ENCODE measurements at regions of chr7 and their contacts with region 1.

Region 1: DNA sequence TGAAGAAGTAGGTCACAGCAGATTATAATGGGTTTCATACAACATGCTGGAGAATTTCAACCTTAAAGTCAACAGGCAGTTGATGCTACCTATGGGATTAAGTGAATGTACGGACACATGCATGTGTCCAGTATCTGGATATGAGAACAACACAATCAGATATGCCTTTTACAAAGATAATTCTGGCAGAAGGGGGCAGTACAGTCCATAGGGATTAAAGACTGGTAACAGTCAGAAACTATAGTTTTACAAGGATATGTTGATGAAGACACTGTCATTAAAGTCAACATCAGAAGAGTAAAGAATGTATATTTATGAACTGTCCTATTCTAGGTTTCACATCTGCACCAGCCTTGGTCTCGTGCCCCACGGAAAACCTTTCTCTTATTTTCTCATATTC is 41.5 kb downstream of the ANKMY2 start:
- DNase-seq: no peak
- H3K4me3 ChIP-seq: no peak overlapping the region
- H3K4me3 Mint-ChIP-seq: no peak overlapping the region
- H3K27ac Mint-ChIP-seq: no peak overlapping the region
- H3K4me1 ChIP-seq: peaks cover 8% of the 10 kb centered on the region
- H3K4me1 Mint-ChIP-seq: peaks cover 12% of the 10 kb centered on the region
- H3K27me3 ChIP-seq: no peaks in the 10 kb centered on the region
- H3K27me3 Mint-ChIP-seq: no peaks in the 10 kb centered on the region
- CTCF ChIP-seq: peak in 1 of 2 experiments; percentile 8

Region 2: GRCh38 chr7:16688249-16688648 is 84.2 kb after region 1 on chr7:
- CTCF ChIA-PET with region 1: no interaction called
- POLR2A ChIA-PET with region 1: no interaction called
- intact Hi-C with region 1: loop called (anchors 5 kb)
- DNase-seq: peak in 1 of 2 experiments; percentile 39
- H3K4me3 ChIP-seq: no peak overlapping the region
- H3K4me3 Mint-ChIP-seq: no peak overlapping the region
- H3K27ac Mint-ChIP-seq: no peak overlapping the region
- H3K4me1 ChIP-seq: peaks cover 13% of the 10 kb centered on the region
- H3K4me1 Mint-ChIP-seq: peaks cover 25% of the 10 kb centered on the region
- H3K27me3 ChIP-seq: no peaks in the 10 kb centered on the region
- H3K27me3 Mint-ChIP-seq: no peaks in the 10 kb centered on the region
- CTCF ChIP-seq: peak in 1 of 2 experiments; percentile 5

Region 3: GRCh38 chr7:16753102-16753931 is 149.3 kb after region 1 on chr7 and contains the start of gene TSPAN13:
- CTCF ChIA-PET with region 1: no interaction called
- POLR2A ChIA-PET with region 1: no interaction called
- intact Hi-C with region 1: loop called (anchors 5 kb)
- DNase-seq: peak; percentile 98 to 99
- H3K4me3 ChIP-seq: peak within 1 kb of the TSS; percentile 91
- H3K4me3 Mint-ChIP-seq: peak within 1 kb of the TSS; percentile 92
- H3K27ac Mint-ChIP-seq: peak within 1 kb of the TSS; percentile 91
- H3K4me1 ChIP-seq: peaks cover 20% of the 10 kb centered on the region
- H3K4me1 Mint-ChIP-seq: peaks cover 20% of the 10 kb centered on the region
- H3K27me3 ChIP-seq: no peaks in the 10 kb centered on the region
- H3K27me3 Mint-ChIP-seq: no peaks in the 10 kb centered on the region
- CTCF ChIP-seq: no peak
- total RNA-seq, gene TSPAN13: 193 and 208 TPM in 2 replicates